Ascending aorta (tissue), 2 donors: ENCODE measurements at regions of chr10 and their contacts with region 1.

Region 1: DNA sequence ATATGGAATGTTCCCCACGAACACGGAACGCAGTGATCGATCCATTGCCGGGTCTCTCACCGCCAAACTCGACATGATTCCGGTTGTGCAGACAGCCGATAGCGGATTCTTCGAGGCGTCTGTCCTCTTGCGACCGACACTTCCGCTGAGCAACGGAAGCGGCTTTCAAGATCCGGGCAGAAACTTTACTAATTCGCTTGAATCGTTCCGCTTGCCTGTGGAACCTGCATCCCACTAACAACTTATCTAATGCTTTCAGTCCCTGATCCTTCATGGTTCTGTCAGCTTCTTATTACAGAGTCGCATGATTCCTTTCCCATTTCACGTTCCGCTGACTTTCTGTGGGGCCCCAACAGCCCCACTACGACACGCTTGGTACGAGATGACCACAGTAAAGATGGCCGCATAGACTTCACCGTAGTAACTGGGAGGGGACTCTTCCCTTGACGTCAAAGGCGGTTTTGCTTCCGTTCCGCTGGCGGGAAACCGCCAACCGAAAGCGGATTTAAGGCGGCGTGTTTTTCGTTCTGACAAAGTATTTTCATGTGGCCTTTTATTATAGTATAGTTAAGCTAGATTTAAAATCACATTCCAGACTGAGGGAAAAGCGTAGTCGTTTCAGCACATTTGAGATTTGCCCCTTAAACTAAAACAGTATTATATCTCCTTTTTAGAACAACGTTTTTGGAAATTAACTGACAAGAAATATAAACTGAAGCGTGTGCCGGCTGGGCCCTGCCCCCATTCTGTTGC is at the start of gene CSTF2T:
- DNase-seq: peak; percentile 68 to 93
- H3K4me3 ChIP-seq: peak within 1 kb of the TSS; percentile 67 to 71
- H3K27ac ChIP-seq: peak within 1 kb of the TSS; percentile 82 to 94
- H3K4me1 ChIP-seq: peaks cover 11 to 42% of the 10 kb centered on the region in 2 donors
- H3K27me3 ChIP-seq: no peaks in the 10 kb centered on the region
- CTCF ChIP-seq: no peak
- total RNA-seq, gene CSTF2T: 11.6 TPM

Region 2: GRCh38 chr10:51596695-51597094 is 103.0 kb before region 1 on chr10:
- intact Hi-C with region 1: no loop called
- DNase-seq: no peak
- H3K4me3 ChIP-seq: no peak overlapping the region
- H3K27ac ChIP-seq: peak overlapping the region in 1 of 2 donors; percentile 10
- H3K4me1 ChIP-seq: no peaks in the 10 kb centered on the region
- H3K27me3 ChIP-seq: no peaks in the 10 kb centered on the region
- CTCF ChIP-seq: no peak

Region 3: DNA sequence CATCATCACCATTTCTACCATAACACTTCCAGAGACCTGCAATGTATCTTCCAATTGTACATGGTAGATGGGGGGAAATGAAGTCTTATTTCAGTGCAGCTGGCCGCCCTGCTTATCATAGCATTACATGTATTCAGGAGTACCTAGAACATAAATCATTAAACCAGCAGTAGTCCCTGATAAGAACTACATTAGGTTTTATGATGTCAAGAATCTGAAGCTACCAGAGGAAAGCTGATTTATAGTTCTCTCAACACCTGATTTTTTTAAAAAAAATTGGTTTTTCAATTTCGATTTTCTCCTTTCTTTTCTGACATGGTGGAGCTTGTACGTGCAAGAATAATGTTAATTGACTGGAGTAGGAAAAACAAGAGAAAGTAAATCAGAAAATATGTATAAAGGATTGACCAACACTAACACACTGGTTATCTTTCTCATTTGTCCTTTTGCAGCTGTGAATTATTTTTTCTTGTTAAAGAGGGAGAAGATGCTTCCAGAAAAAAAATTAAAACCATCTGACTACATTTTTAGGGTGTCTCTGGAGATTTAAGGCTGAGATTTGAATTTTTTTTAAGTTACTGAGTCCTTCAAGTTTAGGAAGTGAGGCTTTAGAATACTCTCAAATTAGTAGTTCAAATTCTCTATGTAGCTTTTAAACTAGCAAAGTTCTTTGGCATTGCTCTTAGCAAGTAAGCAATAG is 59.4 kb before region 1 on chr10:
- intact Hi-C with region 1: loop called (anchors 5 kb)
- DNase-seq: no peak
- H3K4me3 ChIP-seq: no peak overlapping the region
- H3K27ac ChIP-seq: no peak overlapping the region
- H3K4me1 ChIP-seq: peaks cover 0 to 17% of the 10 kb centered on the region in 2 donors
- H3K27me3 ChIP-seq: no peaks in the 10 kb centered on the region
- CTCF ChIP-seq: no peak

Region 4: DNA sequence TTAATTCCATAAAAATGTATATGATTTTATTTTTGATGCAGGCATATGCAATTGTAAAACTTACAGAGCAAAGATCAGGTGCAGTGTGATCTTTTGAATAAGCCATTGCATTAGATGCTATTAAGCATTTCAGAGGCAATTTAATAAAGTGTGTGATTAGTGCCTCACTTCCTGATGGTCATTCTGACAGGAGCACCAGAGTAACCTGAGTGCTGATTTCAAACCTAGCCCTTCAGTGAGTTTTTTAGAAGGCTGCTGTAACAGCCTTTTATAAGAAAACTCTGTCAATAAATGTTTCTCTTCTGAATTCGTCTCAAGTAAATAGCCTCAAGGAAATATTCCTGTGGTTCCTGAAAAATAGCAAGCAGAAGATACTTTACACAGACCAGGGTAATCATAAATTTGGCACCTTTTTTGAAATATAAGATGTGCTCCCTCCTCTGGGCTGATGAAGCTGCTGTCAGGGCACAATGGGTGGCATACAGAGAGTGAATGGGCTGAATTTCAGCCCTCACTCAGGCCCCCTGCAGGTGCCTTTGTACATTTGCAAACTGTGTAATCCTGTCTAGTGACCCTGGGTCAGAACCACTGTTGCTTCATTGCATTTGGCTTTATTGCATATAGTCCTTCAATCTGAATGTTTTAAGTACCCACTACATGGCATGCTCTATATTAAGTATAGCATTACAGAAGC is 193.5 kb after region 1 on chr10:
- intact Hi-C with region 1: loop called (anchors 10 kb)
- DNase-seq: no peak
- H3K4me3 ChIP-seq: no peak overlapping the region
- H3K27ac ChIP-seq: peak overlapping the region; percentile 14 to 84
- H3K4me1 ChIP-seq: peaks cover 10 to 37% of the 10 kb centered on the region in 2 donors
- H3K27me3 ChIP-seq: no peaks in the 10 kb centered on the region
- CTCF ChIP-seq: no peak

Region 5: DNA sequence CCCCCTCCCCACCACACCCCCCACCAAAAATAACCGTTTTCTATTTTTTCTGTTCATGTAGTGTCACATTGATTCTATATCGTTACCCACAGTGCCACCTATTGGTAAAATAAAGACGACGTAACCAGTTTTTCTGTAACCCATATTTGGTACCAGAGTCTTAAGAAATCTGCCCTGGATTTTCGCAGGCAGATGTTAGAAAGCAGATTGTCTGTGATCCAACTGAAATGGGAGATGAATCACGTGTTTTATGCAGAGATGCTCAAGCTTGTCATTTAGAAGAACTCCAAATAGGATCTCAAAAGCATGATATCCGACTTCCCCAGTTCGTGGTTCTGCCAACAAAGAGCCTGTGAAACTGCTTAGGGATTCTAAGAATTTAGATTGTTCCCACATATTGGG is 260.8 kb after region 1 on chr10:
- intact Hi-C with region 1: loop called (anchors 5 kb)
- DNase-seq: no peak
- H3K4me3 ChIP-seq: no peak overlapping the region
- H3K27ac ChIP-seq: peak overlapping the region in 1 of 2 donors; percentile 29
- H3K4me1 ChIP-seq: peaks cover 3 to 11% of the 10 kb centered on the region in 2 donors
- H3K27me3 ChIP-seq: no peaks in the 10 kb centered on the region
- CTCF ChIP-seq: peak; percentile 42 to 67 (median 43)